ENCODE measurements at regions of chr16 and their contacts with region 1.

Region 1: GRCh38 chr16:52191531-52192134 is 355.3 kb downstream of the TOX3 start:
- DNase-seq: peak; percentile 25 to 59
- ATAC-seq: no peak
- H3K4me3 ChIP-seq: no peak overlapping the region
- H3K27ac ChIP-seq: no peak overlapping the region
- H3K4me1 ChIP-seq: no peaks in the 10 kb centered on the region
- H3K27me3 ChIP-seq: no peaks in the 10 kb centered on the region
- CTCF ChIP-seq: peak; percentile 67

Region 2: GRCh38 chr16:52912565-52913173 is 721.0 kb after region 1 on chr16:
- intact Hi-C with region 1: loop called (anchors 5 kb)
- DNase-seq: peak; percentile 30 to 51
- ATAC-seq: no peak
- H3K4me3 ChIP-seq: no peak overlapping the region
- H3K27ac ChIP-seq: no peak overlapping the region
- H3K4me1 ChIP-seq: no peaks in the 10 kb centered on the region
- H3K27me3 ChIP-seq: no peaks in the 10 kb centered on the region
- CTCF ChIP-seq: peak; percentile 49

Region 3: GRCh38 chr16:53022374-53022773 is 830.7 kb after region 1 on chr16:
- intact Hi-C with region 1: loop called in 1 of 2 experiments (anchors 10 kb)
- DNase-seq: no peak
- ATAC-seq: peak in 1 of 4 donors; percentile 37
- H3K4me3 ChIP-seq: no peak overlapping the region
- H3K27ac ChIP-seq: no peak overlapping the region
- H3K4me1 ChIP-seq: no peaks in the 10 kb centered on the region
- H3K27me3 ChIP-seq: no peaks in the 10 kb centered on the region
- CTCF ChIP-seq: peak; percentile 40